Cardiac septum (tissue), 1 donor: ENCODE measurements at regions of chr2 and their contacts with region 1.

Region 1: GRCh38 chr2:112542123-112542983 is at the start of gene POLR1B:
- DNase-seq: peak; percentile 91
- total RNA-seq, gene POLR1B: 10.1 TPM

Region 2: GRCh38 chr2:112481050-112481527 is 61.3 kb before region 1 on chr2:
- intact Hi-C with region 1: loop called (anchors 5 kb)
- DNase-seq: peak; percentile 93

Region 3: DNA sequence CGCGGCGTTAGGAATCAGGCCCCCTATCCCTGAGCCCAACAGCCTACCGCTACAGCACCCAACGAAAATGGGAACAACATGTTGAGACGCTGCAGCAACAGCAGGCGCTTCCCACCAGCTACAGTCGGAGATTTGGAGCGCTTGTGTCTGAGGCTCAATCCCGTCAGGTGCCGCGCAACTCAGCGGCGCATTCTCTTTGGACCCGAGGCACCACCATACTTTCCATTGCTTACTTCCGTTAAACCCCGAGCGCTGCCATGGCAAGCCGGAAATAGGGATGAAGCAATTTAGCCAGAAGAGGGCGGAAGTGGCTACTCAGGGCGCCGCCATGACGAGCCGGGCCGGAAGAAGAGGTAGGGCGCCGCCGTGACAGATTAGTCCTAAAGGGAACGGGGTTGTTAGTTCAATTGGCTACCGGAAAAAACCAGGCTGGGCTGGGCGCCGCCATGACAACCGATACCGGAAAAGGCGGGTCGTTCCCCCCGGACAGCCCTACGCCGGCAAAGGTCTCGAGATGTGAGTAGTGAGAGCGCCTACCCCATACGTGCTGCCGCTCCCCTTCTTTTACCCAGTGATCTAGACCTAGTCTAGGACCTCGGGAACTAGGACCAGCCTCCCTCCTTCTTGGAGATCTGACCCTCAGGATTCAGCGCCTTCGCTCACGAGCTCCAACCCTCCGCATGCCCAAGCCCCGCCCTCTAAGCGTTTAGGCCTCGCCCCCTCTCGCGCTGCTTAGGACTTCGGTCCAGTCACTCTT is 42.0 kb after region 1 on chr2 and contains the start of gene CHCHD5:
- intact Hi-C with region 1: loop called (anchors 1 kb)
- DNase-seq: peak; percentile 97
- total RNA-seq, gene CHCHD5: 24.9 TPM